GM12878 (cell line): ENCODE measurements at regions of chr12 and their contacts with region 1.

Region 1: DNA sequence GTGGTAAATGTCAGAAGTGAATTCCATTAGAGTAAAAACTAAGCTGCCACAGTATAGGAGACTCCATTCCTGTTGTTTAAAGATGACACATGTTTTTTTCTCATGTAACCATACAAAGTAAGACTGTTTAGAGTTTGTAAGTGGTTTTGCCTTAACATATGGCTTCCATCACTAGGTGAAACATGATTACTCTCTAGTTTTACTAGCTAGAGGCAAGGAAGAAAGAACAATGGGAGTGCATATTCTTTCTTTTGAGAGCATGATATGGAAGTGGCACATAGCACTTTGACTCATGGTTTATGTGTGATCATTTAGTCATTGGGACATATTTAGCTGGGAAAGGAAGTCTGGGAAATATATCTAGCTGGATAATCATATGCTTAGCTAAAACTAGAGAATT is 7.7 kb downstream of the ATF7IP start:
- DNase-seq: no peak
- ATAC-seq: peak; percentile 31
- H3K4me3 ChIP-seq: no peak overlapping the region
- H3K27ac ChIP-seq: peak overlapping the region; percentile 3; the same call in 1 of the 2 replicates
- H3K4me1 ChIP-seq: no peaks in the 10 kb centered on the region; the same call in 1 of the 2 replicates
- H3K27me3 ChIP-seq: no peaks in the 10 kb centered on the region
- CTCF ChIP-seq: no peak
- EP300 ChIP-seq: no peak
- POLR2A ChIP-seq: no peak
- RAD21 ChIP-seq: no peak

Region 2: DNA sequence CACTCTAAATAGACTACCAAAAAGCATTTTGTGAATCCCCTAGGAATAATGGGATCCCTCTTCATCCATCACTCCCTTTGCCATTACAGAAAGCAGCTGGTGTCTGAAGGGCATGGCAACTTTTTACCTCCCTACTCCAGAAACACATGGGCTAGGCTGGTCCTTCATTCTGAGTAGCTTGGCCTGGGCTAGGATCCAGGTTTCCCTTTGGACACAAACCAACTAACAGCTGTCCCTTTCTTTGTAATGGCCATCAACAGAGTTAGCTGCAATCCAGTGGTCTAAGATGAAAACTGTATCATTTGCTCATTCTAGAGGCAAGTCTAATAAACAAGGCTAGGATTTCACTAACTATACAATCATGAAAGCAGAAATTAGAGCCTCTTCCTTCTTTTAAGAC is 399.2 kb before region 1 on chr12:
- CTCF ChIA-PET with region 1: no interaction called
- POLR2A ChIA-PET with region 1: no interaction called
- RAD21 ChIA-PET with region 1: no interaction called
- SMC1A ChIA-PET with region 1: no interaction called
- in situ Hi-C with region 1: no loop called
- intact Hi-C with region 1: no loop called
- DNase-seq: no peak
- ATAC-seq: no peak
- H3K4me3 ChIP-seq: no peak overlapping the region
- H3K27ac ChIP-seq: no peak overlapping the region
- H3K4me1 ChIP-seq: no peaks in the 10 kb centered on the region
- H3K27me3 ChIP-seq: peaks cover 0 to 3% of the 10 kb centered on the region in 2 experiments; a peak in 2 of 4 replicates
- CTCF ChIP-seq: no peak
- EP300 ChIP-seq: no peak
- POLR2A ChIP-seq: no peak
- RAD21 ChIP-seq: no peak

Region 3: DNA sequence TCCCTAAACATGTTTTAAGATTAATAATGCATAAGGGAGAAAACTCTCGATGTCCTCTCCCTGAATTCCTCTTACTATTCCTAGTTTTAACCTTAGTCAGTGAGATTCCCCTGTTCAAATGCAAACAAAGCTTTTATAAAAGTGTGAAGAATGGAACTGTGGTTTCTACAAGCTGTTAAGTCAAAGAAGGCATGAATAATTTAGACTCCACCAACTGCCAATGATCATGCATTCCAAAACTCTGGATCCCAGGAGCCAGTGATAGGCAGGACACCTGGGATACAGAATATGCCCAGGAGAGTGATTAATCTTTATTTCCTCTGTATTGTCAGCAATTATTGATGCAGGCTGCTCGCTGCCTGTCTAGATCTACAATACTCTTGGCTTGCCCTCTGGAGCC is 198.0 kb before region 1 on chr12:
- CTCF ChIA-PET with region 1: no interaction called
- POLR2A ChIA-PET with region 1: no interaction called
- RAD21 ChIA-PET with region 1: no interaction called
- SMC1A ChIA-PET with region 1: no interaction called
- in situ Hi-C with region 1: no loop called
- intact Hi-C with region 1: no loop called
- DNase-seq: no peak
- ATAC-seq: no peak
- H3K4me3 ChIP-seq: no peak overlapping the region
- H3K27ac ChIP-seq: no peak overlapping the region
- H3K4me1 ChIP-seq: peaks cover 5% of the 10 kb centered on the region
- H3K27me3 ChIP-seq: no peaks in the 10 kb centered on the region
- CTCF ChIP-seq: no peak
- EP300 ChIP-seq: no peak
- POLR2A ChIP-seq: no peak
- RAD21 ChIP-seq: no peak

Region 4: DNA sequence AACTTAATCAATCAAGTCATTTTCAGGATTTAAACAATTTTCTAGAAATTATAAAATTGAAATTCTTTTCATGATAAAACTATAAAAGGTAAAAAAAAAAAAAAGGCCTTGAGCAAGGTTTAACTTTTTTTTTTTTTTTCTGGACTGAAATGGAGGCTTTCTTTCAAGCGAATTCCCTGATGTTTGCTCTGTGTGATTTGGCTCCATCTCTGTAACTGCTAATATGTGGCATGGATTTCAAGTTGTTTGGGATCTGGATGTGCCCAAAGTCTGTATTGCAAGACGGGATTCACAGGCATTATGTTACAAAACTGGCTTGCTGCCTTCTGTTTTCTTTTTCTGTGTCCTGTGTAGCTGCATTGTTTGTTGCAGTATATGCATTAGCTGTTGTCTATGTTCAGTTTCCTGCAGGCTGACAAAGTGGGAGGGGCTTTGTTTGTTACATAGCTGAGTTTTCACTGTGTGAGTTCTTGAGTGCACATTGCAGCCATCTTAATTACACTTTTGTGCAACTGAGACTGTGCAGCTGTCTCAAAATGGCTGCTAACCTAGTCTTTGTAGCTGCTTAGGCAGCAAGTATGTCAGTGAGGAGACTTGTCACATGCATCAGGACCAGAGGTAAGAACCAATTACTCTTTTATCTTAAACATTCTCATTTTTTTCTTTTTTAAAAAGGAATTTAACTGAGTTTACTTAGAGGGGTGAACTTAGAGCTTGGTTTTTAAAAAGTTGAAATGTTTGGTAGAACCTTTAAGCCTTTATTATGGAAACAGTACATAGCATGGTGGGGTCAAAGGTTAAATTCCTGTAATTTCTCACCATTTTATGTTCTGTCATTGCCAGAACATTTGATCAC is 11.8 kb after region 1 on chr12:
- CTCF ChIA-PET with region 1: interaction called, 57 read pairs
- POLR2A ChIA-PET with region 1: interaction called, 22 read pairs
- RAD21 ChIA-PET with region 1: interaction called, 97 read pairs
- SMC1A ChIA-PET with region 1: interaction called, 170 read pairs
- in situ Hi-C with region 1: no loop called
- intact Hi-C with region 1: no loop called
- DNase-seq: peak; percentile 92
- ATAC-seq: peak; percentile 90
- H3K4me3 ChIP-seq: peak overlapping the region; percentile 18; the same call in 1 of the 2 replicates
- H3K27ac ChIP-seq: peak overlapping the region; percentile 63
- H3K4me1 ChIP-seq: peaks cover 5% of the 10 kb centered on the region
- H3K27me3 ChIP-seq: no peaks in the 10 kb centered on the region
- CTCF ChIP-seq: no peak
- EP300 ChIP-seq: no peak; a peak in 1 of 4 replicates
- POLR2A ChIP-seq: peak; percentile 46; the same call in 1 of the 2 replicates
- RAD21 ChIP-seq: no peak

Region 5: DNA sequence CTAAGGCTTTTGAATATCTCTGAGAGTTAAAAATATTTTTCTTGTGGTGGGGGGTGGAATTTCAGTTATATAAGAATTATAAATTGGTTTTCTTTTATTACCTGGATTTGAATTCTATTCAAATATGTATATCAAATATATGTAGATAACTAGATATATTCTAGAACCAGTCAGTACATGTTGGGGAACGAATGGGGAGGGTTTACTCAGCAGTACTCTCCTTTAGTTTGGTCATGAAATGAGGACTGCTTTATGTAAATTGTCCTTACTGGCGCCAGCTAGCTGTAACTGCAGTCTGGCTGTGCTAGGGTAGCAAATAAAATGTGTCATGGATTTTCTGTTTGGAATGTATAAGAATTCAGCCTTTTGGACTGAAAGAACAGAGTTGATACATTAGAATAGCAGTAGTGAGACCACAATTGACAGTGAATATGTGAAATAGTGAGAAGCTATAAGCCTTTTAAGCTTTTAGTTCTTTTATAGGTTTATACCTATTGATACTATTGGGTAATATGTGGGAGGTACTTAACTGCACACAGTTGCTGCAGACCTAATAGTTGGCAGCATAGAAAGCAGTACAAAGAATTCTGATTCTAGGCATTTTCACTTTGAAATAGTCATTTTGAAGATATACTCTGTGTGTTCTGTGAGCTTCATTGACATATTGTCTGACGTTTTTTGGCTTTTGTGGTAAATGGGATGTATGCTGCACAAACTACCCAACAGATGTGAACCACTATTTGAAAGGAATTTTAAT is 21.3 kb after region 1 on chr12:
- CTCF ChIA-PET with region 1: interaction called, 7 read pairs
- POLR2A ChIA-PET with region 1: interaction called, 7 read pairs
- RAD21 ChIA-PET with region 1: interaction called, 21 read pairs
- SMC1A ChIA-PET with region 1: interaction called, 13 read pairs
- in situ Hi-C with region 1: no loop called
- intact Hi-C with region 1: no loop called
- DNase-seq: peak; percentile 65
- ATAC-seq: peak; percentile 77
- H3K4me3 ChIP-seq: 0 out of 2 replicates have a peak overlapping the region, but pooled peaks have one; percentile 18
- H3K27ac ChIP-seq: peak overlapping the region; percentile 82
- H3K4me1 ChIP-seq: peaks cover 11% of the 10 kb centered on the region; the same call in 1 of the 2 replicates
- H3K27me3 ChIP-seq: no peaks in the 10 kb centered on the region
- CTCF ChIP-seq: no peak; a peak in 1 of 6 replicates
- EP300 ChIP-seq: no peak
- POLR2A ChIP-seq: 0 out of 2 replicates have a peak, but pooled peaks have one; percentile 22
- RAD21 ChIP-seq: no peak

Region 6: DNA sequence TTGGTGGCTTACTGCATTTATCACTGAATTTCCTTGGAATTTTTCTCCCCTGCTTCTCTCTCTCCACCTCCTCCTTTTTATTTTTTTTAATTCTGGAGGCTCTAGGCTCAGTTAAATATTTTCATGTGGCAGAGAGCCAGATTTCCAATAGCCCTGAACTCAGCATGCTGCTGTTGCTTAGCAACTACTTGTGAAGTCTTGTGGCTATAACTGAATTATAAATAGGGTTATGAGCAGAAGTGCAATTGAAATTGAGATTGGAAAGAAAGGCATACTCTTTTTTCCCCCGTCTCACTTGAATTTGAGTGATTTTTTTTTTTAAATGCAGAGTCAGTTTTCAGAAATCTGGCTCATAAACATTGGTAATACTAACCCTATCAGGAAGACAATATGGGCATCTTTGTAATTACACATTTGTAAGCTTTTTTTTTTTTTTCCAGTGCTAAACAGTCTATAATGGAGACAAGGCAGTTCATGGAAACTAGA is 30.5 kb after region 1 on chr12:
- CTCF ChIA-PET with region 1: interaction called, 6 read pairs
- POLR2A ChIA-PET with region 1: interaction called, 3 read pairs
- RAD21 ChIA-PET with region 1: interaction called, 12 read pairs
- SMC1A ChIA-PET with region 1: interaction called, 9 read pairs
- in situ Hi-C with region 1: no loop called
- intact Hi-C with region 1: no loop called
- DNase-seq: peak; percentile 49
- ATAC-seq: peak; percentile 75
- H3K4me3 ChIP-seq: peak overlapping the region; percentile 13; the same call in 1 of the 2 replicates
- H3K27ac ChIP-seq: peak overlapping the region; percentile 77
- H3K4me1 ChIP-seq: peaks cover 3% of the 10 kb centered on the region; the same call in 1 of the 2 replicates
- H3K27me3 ChIP-seq: no peaks in the 10 kb centered on the region
- CTCF ChIP-seq: no peak
- EP300 ChIP-seq: no peak
- POLR2A ChIP-seq: no peak
- RAD21 ChIP-seq: no peak

Region 7: GRCh38 chr12:14854586-14855183 is 481.5 kb after region 1 on chr12:
- CTCF ChIA-PET with region 1: no interaction called
- POLR2A ChIA-PET with region 1: no interaction called
- RAD21 ChIA-PET with region 1: no interaction called
- SMC1A ChIA-PET with region 1: no interaction called
- in situ Hi-C with region 1: no loop called
- intact Hi-C with region 1: no loop called
- DNase-seq: no peak
- ATAC-seq: peak; percentile 84
- H3K4me3 ChIP-seq: no peak overlapping the region
- H3K27ac ChIP-seq: no peak overlapping the region
- H3K4me1 ChIP-seq: no peaks in the 10 kb centered on the region
- H3K27me3 ChIP-seq: no peaks in the 10 kb centered on the region
- CTCF ChIP-seq: no peak
- EP300 ChIP-seq: no peak
- POLR2A ChIP-seq: no peak
- RAD21 ChIP-seq: no peak